ENCODE measurements at regions of chrX and their contacts with region 1.

Region 1: DNA sequence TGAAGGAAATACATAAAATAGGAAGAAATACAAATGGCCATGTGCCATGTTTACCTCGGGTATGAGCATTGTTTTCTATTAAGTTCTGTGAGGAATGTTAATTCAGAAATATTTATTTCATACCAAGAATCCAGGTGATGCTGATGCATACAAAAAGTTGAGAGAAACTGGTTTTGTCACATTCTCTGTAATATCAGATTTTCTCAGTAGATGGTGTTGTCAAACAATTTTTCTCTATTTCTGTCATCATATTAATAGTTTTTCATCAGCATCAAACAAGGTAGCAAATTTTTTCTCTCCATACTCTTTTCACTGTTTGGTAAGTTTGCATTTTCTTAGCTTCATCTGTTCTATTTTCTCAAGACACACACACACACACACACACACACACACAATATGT is 179.8 kb downstream of the KLHL4 start:
- DNase-seq: peak; percentile 8
- ATAC-seq: 0 out of 2 replicates have a peak, but pooled peaks have one; percentile 13
- H3K4me3 ChIP-seq: no peak overlapping the region
- H3K27ac ChIP-seq: no peak overlapping the region
- H3K4me1 ChIP-seq: peaks cover 9% of the 10 kb centered on the region
- H3K27me3 ChIP-seq: no peaks in the 10 kb centered on the region
- CTCF ChIP-seq: 0 out of 2 replicates have a peak, but pooled peaks have one; percentile 8

Region 2: GRCh38 chrX:87728024-87728423 is 30.6 kb after region 1 on chrX:
- CTCF ChIA-PET with region 1: no interaction called
- POLR2A ChIA-PET with region 1: no interaction called
- intact Hi-C with region 1: loop called (anchors 1 kb)
- DNase-seq: no peak
- ATAC-seq: no peak
- H3K4me3 ChIP-seq: no peak overlapping the region
- H3K27ac ChIP-seq: no peak overlapping the region
- H3K4me1 ChIP-seq: no peaks in the 10 kb centered on the region
- H3K27me3 ChIP-seq: no peaks in the 10 kb centered on the region
- CTCF ChIP-seq: no peak

Region 3: DNA sequence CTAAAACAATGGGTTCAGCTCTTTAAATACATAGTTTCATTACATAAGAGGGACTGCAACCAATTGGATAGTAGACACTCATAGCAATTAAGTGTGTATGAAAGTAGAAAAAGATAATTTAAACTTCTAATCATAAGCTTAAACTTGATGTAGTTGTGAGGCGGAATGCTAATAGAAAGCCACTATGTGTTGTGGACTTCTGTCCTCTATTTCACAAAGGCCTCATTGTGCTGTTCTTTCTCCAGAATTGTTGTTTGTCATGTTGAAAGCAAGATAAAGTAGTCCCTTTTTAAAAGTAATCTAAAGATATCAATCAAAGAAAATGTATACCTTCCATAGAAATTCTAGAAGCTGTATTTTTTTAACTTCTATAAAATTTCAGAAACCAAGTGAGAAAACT is 149.5 kb after region 1 on chrX:
- CTCF ChIA-PET with region 1: no interaction called
- POLR2A ChIA-PET with region 1: no interaction called
- intact Hi-C with region 1: no loop called
- DNase-seq: no peak
- ATAC-seq: no peak
- H3K4me3 ChIP-seq: no peak overlapping the region
- H3K27ac ChIP-seq: no peak overlapping the region
- H3K4me1 ChIP-seq: no peaks in the 10 kb centered on the region
- H3K27me3 ChIP-seq: no peaks in the 10 kb centered on the region
- CTCF ChIP-seq: no peak